Dorsolateral prefrontal cortex (tissue), 120 donors: ENCODE measurements at regions of chr10 and their contacts with region 1.

Region 1: DNA sequence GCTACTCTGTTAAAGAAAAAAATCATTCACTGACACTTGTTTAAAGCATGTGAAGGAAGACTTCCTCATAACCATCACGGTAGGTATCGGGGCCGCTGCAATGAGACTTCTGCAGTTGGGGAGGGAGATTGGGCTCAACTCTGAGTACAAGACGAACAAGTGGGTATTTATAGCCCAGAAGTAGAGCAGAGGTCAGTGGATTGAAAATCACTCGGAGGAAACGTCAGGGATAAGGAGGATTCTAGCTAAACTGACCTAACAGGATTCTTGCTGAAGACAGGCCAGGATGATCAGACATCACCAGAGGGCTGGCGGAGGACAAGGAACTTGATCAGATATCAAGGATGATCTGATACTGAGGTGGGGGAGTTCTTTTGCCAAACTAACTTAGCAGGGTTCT is 33.3 kb downstream of the ITPRIP start:
- DNase-seq: no peak
- H3K4me3 ChIP-seq: no peak overlapping the region
- H3K27ac ChIP-seq: peak overlapping the region in 28 of 59 donors; percentile 1 to 69 (median 32)
- H3K27me3 ChIP-seq: no peaks in the 10 kb centered on the region
- CTCF ChIP-seq: no peak

Region 2: DNA sequence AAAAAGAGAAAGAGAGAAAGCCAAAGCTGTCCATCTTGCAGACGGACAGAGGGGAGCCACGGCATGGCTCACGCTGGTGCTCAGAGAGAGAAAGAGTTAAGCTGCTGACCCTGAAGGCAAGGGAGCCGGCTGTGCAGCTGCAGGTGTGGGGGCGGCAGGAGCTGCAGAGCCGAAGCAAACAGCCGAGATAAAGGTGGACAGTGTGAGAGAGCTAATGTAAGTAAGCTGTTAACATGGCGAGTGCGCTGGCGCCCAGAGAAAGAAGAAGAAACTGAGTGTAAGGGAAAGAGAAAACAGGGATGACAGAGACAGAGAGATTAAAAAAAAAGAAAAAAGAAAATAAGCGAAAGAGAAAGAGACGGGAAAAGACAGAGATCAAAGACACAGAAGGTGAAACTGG is 237.4 kb before region 1 on chr10:
- intact Hi-C with region 1: no loop called
- DNase-seq: no peak
- H3K4me3 ChIP-seq: peak overlapping the region in 42 of 59 donors; percentile 3 to 56 (median 34)
- H3K27ac ChIP-seq: no peak overlapping the region
- H3K27me3 ChIP-seq: no peaks in the 10 kb centered on the region
- CTCF ChIP-seq: no peak

Region 3: GRCh38 chr10:104350127-104350635 is 45.2 kb after region 1 on chr10:
- intact Hi-C with region 1: loop called in 1 of 2 experiments (anchors 1 kb)
- DNase-seq: peak in 1 of 10 donors; percentile 37
- H3K4me3 ChIP-seq: peak overlapping the region in 48 of 59 donors; percentile 10 to 54 (median 36)
- H3K27ac ChIP-seq: peak overlapping the region in 28 of 59 donors; percentile 5 to 77 (median 44)
- H3K27me3 ChIP-seq: no peaks in the 10 kb centered on the region
- CTCF ChIP-seq: peak; percentile 56 to 93 (median 80)